AG04450 (cell line): ENCODE measurements at regions of chr17 and their contacts with region 1.

Region 1: GRCh38 chr17:2347547-2348307 is 10.4 kb downstream of the SGSM2 start:
- DNase-seq: peak; percentile 72
- H3K4me3 ChIP-seq: no peak overlapping the region
- H3K27ac ChIP-seq: peak overlapping the region; percentile 43
- H3K27me3 ChIP-seq: no peaks in the 10 kb centered on the region
- CTCF ChIP-seq: no peak

Region 2: DNA sequence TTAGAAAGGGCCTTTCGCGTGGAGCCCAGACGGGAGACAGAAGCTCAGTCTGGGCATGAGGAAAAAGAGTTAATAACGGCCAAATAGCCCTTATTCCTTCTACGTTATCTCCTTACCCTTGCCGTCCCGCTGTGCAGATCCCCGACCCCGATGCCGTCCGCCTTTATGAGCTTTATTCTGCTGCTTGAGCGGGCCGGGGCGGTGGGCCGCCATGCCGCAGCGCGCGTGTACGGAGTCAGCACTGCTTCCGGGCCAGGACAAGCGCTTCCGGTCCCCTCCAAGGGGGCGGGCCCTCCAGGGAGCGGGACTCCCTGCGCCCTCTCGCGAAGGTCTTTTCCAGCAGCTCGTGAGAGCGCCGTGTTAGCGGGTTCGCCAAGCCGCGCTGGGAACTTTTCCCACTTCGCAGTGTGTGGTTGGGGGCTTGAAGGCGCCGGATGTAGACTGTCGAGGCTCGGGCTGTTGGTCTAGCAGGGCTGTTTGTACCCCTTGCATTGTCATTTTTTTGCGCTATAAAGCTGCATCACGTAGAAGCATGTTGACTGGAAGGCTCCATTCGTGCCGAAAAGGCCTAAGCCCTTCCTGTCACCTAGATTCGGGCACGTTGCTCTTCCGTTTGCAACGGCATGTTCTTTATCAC is 11.4 kb before region 1 on chr17 and contains the start of gene TSR1:
- CTCF ChIA-PET with region 1: interaction called, 15 read pairs
- POLR2A ChIA-PET with region 1: interaction called, 7 read pairs
- DNase-seq: peak; percentile 68
- H3K4me3 ChIP-seq: peak within 1 kb of the TSS; percentile 95
- H3K27ac ChIP-seq: peak within 1 kb of the TSS; percentile 31
- H3K27me3 ChIP-seq: no peaks in the 10 kb centered on the region
- CTCF ChIP-seq: peak; percentile 36
- polyA plus RNA-seq, gene TSR1: 15.1 and 15.5 TPM in 2 replicates

Region 3: DNA sequence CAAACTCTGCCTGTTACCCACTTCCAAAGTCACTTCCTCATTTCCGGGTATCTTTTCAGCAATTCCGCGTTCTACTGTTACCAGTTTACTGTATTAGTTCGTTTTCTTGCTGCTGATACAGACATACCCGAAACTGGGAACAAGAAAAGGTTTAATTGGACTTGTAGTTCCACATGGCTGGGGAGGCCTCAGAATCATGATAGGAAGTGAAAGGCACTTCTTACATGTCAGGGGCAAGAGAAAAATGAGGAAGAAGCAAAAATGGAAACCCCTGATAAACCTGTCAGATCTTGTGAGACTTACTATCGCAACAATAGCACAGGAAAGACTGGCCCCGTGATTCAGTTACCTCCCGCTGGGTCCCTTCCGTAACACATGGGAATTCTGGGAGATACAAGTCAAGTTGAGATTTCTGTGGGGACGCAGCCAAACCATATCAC is 276.6 kb after region 1 on chr17:
- CTCF ChIA-PET with region 1: interaction called, 3 read pairs
- POLR2A ChIA-PET with region 1: interaction called, 12 read pairs
- DNase-seq: no peak
- H3K4me3 ChIP-seq: no peak overlapping the region
- H3K27ac ChIP-seq: no peak overlapping the region
- H3K27me3 ChIP-seq: no peaks in the 10 kb centered on the region
- CTCF ChIP-seq: no peak